Right ventricle myocardium superior (tissue), 1 donor: ENCODE measurements at regions of chr5 and their contacts with region 1.

Region 1: GRCh38 chr5:172640822-172641358 is at the start of gene NEURL1B:
- DNase-seq: peak; percentile 90
- ATAC-seq: peak; percentile 89
- total RNA-seq, gene NEURL1B: 28.8 TPM

Region 2: GRCh38 chr5:172479044-172479783 is 161.7 kb before region 1 on chr5:
- intact Hi-C with region 1: loop called (anchors 5 kb)
- DNase-seq: peak; percentile 91
- ATAC-seq: peak; percentile 95

Region 3: DNA sequence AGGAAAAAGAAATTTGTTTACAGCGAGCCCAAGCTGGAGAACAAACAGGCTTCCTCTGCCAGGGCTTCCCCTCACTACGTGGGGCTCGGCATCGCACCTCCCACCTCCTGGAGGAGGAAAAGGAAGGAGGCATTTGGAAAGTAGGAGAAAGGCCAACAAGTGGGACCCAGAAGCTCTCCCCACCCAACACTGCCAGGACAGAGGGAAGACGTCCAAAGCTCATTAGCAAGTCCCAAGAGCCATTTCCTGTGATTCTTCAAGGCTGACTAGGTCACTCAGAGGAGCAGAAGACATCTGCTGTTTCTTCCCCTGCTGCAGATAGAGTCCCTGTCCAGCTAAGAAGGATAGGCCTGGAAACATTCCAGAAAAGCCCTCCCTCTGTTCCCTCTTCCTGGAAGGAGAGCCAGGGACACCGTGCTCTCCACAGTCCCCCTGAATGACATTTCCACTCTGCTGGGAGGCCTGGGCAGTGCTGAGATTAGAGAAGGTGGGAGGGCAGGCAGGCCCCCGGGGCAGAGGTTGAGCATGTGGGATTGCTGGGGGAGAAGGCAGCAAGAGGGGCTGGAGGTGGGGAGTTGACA is 56.9 kb before region 1 on chr5:
- intact Hi-C with region 1: loop called (anchors 10 kb)
- DNase-seq: peak; percentile 79
- ATAC-seq: peak; percentile 73